ENCODE measurements at regions of chr2 and their contacts with region 1.

Region 1: DNA sequence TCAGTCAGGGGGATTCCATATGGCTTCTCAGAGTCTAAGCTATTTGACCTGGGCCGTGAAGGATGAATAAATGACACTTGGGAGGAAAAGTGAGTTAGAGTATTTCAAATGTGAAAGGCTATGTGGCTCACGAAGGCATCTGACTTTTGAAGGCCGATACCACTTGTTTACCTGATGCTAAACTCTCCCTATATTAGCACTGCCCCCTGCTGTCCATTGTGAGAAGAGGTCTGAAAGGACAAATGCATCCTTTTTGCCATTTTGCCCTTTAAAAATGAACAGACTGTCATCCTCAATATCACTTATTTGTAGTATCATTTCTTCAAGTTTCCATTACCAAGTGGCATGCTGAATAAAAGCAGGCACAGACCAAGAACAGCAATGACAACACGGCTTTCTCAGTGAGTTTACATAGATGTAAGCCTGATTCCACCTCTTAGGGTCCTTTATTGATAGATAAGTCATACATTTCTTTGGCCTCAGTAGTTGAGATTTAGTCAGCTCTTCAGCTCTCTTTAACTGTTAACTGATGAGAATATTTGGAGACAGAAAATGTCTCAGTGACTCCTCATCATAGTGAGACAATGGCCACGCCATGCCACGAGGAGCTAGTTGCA is 40.1 kb downstream of the DOCK10 start:
- DNase-seq: peak; percentile 61
- H3K4me3 ChIP-seq: no peak overlapping the region
- H3K27ac ChIP-seq: no peak overlapping the region
- H3K4me1 ChIP-seq: peaks cover 15% of the 10 kb centered on the region
- H3K27me3 ChIP-seq: no peaks in the 10 kb centered on the region
- CTCF ChIP-seq: peak; percentile 82 to 87

Region 2: GRCh38 chr2:224357098-224357901 is 644.8 kb before region 1 on chr2:
- CTCF ChIA-PET with region 1: no interaction called
- dilution Hi-C with region 1: no loop called
- in situ Hi-C with region 1: no loop called
- intact Hi-C with region 1: loop called (anchors 1 kb)
- DNase-seq: peak; percentile 41
- H3K4me3 ChIP-seq: no peak overlapping the region
- H3K27ac ChIP-seq: no peak overlapping the region
- H3K4me1 ChIP-seq: peaks cover 15% of the 10 kb centered on the region
- H3K27me3 ChIP-seq: no peaks in the 10 kb centered on the region
- CTCF ChIP-seq: peak; percentile 72 to 80

Region 3: DNA sequence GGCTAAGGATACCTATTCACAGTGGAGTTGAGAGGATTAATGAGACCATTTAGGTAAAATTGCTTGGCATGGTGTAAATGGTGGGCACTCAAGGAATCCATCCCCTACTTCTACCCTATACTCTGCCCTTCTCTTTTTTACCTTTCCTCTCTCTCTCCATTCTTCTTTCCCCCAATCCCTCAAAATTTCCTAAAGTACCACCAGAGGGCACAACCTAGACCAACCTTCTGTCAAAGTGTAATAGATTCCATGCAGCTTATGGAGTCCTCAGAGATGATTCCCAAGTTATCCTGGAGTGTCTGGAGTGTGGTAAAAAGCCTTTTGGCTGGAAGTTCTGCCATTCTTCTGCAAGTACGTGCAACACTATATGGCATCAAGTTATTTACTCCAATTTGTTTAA is 253.0 kb before region 1 on chr2:
- CTCF ChIA-PET with region 1: no interaction called
- dilution Hi-C with region 1: no loop called
- in situ Hi-C with region 1: no loop called
- intact Hi-C with region 1: loop called (anchors 1 kb)
- DNase-seq: no peak
- H3K4me3 ChIP-seq: no peak overlapping the region
- H3K27ac ChIP-seq: no peak overlapping the region
- H3K4me1 ChIP-seq: peaks cover under 1% of the 10 kb centered on the region
- H3K27me3 ChIP-seq: no peaks in the 10 kb centered on the region
- CTCF ChIP-seq: peak; percentile 7 to 41

Region 4: GRCh38 chr2:224816816-224817215 is 185.3 kb before region 1 on chr2:
- CTCF ChIA-PET with region 1: no interaction called
- dilution Hi-C with region 1: no loop called
- in situ Hi-C with region 1: loop called in 1 of 2 experiments (anchors 25 kb)
- intact Hi-C with region 1: no loop called
- DNase-seq: peak; percentile 63
- H3K4me3 ChIP-seq: no peak overlapping the region
- H3K27ac ChIP-seq: peak overlapping the region; percentile 37
- H3K4me1 ChIP-seq: peaks cover 10% of the 10 kb centered on the region
- H3K27me3 ChIP-seq: no peaks in the 10 kb centered on the region
- CTCF ChIP-seq: no peak

Region 5: DNA sequence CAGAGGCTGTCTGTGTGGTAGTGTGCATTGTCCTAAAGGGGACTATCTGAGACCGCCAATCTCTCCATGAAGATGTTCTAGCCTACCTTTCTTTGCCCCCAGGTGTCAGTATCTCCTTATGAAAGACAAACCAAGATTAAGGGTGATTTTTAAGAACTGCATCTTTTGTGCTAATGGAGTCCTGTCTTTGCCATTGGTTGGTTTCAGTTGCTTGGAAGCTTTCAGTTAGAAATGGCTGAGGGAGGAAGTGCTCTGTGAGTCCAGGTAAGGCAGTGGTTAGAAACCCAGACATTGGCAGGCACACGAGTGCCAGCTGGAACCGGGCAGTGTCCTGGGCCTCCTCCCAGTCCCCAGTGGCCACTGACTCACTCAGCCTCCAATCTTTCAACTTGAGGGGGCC is 71.2 kb before region 1 on chr2:
- CTCF ChIA-PET with region 1: no interaction called
- dilution Hi-C with region 1: no loop called
- in situ Hi-C with region 1: no loop called
- intact Hi-C with region 1: loop called (anchors 5 kb)
- DNase-seq: no peak
- H3K4me3 ChIP-seq: no peak overlapping the region
- H3K27ac ChIP-seq: no peak overlapping the region
- H3K4me1 ChIP-seq: peaks cover 5% of the 10 kb centered on the region
- H3K27me3 ChIP-seq: no peaks in the 10 kb centered on the region
- CTCF ChIP-seq: no peak

Region 6: DNA sequence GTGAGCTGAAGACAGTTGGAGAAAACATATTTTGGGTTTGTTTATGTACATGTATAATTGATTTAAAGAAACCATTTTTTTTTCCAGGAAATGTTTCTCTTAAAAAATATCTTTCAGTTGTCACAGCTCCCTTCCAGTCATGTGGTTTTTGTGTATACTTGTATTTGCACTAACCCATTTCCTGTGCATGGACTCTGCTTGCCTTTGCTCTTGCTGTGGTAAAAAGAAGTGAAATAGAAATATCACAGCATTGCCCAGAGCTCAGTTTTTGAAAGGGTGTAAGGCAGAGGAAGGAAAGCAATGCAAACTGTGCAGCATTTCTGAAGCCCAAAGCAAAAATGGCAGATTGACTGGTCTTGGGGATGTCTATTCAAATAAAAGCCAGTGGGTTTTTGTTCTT is 50.6 kb after region 1 on chr2:
- CTCF ChIA-PET with region 1: no interaction called
- dilution Hi-C with region 1: no loop called
- in situ Hi-C with region 1: no loop called
- intact Hi-C with region 1: no loop called
- DNase-seq: no peak
- H3K4me3 ChIP-seq: no peak overlapping the region
- H3K27ac ChIP-seq: no peak overlapping the region
- H3K4me1 ChIP-seq: no peaks in the 10 kb centered on the region
- H3K27me3 ChIP-seq: no peaks in the 10 kb centered on the region
- CTCF ChIP-seq: no peak

Region 7: GRCh38 chr2:225270861-225271260 is 268.7 kb after region 1 on chr2:
- CTCF ChIA-PET with region 1: no interaction called
- dilution Hi-C with region 1: no loop called
- in situ Hi-C with region 1: no loop called
- intact Hi-C with region 1: loop called (anchors 10 kb)
- DNase-seq: peak; percentile 74
- H3K4me3 ChIP-seq: no peak overlapping the region
- H3K27ac ChIP-seq: no peak overlapping the region
- H3K4me1 ChIP-seq: peaks cover 6% of the 10 kb centered on the region
- H3K27me3 ChIP-seq: peaks cover 3% of the 10 kb centered on the region
- CTCF ChIP-seq: peak; percentile 22 to 45